ENCODE measurements at regions of chr2 and their contacts with region 1.

Region 1: DNA sequence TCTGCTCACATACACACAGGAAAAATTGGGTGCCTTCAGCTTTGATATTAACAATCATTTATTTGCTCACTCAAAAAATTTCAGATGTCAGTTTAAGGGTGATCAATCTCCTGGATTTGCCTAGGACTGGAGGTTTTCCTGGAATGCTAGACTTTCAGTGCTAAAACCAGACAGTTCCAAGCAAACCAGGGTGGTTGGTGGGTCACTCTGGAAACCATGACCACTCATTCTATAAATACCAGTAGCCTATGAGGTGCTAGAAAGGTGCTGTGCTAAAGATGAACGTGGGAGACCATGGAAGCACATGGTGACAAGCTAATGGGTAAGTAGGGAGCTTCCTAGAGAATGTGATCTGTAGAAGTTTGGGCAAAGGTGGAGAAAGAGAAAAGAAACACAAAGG is 25.4 kb upstream of the STPG4 start:
- DNase-seq: no peak
- H3K4me3 ChIP-seq: no peak overlapping the region
- H3K27ac ChIP-seq: no peak overlapping the region
- H3K4me1 ChIP-seq: peaks cover 0 to 4% (median 0%) of the 10 kb centered on the region in 4 donors
- H3K27me3 ChIP-seq: no peaks in the 10 kb centered on the region
- CTCF ChIP-seq: no peak

Region 2: GRCh38 chr2:47109007-47109375 is 71.5 kb before region 1 on chr2:
- intact Hi-C with region 1: no loop called
- DNase-seq: no peak
- H3K4me3 ChIP-seq: no peak overlapping the region
- H3K27ac ChIP-seq: no peak overlapping the region
- H3K4me1 ChIP-seq: no peaks in the 10 kb centered on the region
- H3K27me3 ChIP-seq: no peaks in the 10 kb centered on the region
- CTCF ChIP-seq: no peak

Region 3: DNA sequence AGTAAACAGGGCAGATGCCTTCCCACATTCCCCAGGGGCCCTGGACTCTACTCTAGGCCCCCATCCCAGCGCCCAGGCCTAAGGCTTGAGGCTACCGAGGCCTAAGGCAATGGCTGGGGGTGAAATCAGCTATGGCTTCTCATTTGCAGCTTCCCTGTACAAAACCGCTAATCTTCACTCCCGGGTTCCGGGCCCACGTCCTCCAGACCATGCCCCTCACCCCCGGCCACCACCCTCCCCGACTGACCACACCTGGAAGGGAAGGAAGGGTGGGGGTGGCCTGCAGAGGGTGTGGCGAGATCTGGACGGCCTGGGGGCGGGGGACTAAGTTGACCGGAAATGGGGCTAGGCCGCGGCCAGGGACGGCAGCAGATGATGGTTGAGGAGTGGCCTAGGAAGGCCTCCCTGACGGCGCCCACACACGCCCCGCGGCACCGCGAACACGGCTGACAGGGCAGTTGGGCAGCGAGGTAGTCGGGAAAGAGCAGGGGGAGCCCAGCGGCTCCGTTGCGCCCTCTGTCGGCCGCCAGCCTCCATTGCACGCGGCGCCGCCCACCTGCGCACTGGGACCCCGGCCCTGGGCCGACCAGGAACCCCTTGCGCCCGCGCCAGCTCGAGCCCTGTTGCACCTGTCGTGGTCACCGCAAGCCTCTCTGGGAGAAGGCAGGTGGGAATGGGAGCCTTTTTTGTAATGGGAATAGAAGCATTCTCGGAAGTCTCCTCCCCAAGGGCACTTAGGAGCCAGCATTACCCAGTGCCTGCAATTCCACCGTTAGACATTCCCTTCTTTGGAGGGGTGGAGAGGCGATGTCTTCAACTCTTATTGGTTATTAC is 91.7 kb after region 1 on chr2:
- intact Hi-C with region 1: loop called (anchors 5 kb)
- DNase-seq: peak; percentile 43 to 77
- H3K4me3 ChIP-seq: peak overlapping the region; percentile 20 to 47
- H3K27ac ChIP-seq: peak overlapping the region; percentile 74 to 80
- H3K4me1 ChIP-seq: peaks cover 0 to 52% (median 27%) of the 10 kb centered on the region in 4 donors
- H3K27me3 ChIP-seq: no peaks in the 10 kb centered on the region
- CTCF ChIP-seq: peak; percentile 93 to 98

Region 4: GRCh38 chr2:47798631-47799030 is 618.1 kb after region 1 on chr2:
- intact Hi-C with region 1: no loop called
- DNase-seq: no peak
- H3K4me3 ChIP-seq: no peak overlapping the region
- H3K27ac ChIP-seq: no peak overlapping the region
- H3K4me1 ChIP-seq: no peaks in the 10 kb centered on the region
- H3K27me3 ChIP-seq: no peaks in the 10 kb centered on the region
- CTCF ChIP-seq: no peak

Region 5: GRCh38 chr2:48292393-48292792 is 1111.9 kb after region 1 on chr2:
- intact Hi-C with region 1: no loop called
- DNase-seq: no peak
- H3K4me3 ChIP-seq: no peak overlapping the region
- H3K27ac ChIP-seq: no peak overlapping the region
- H3K4me1 ChIP-seq: no peaks in the 10 kb centered on the region
- H3K27me3 ChIP-seq: no peaks in the 10 kb centered on the region
- CTCF ChIP-seq: no peak

Measured in tibial artery (tissue), 4 donors.